WTC11 (cell line): ENCODE measurements at regions of chr7 and their contacts with region 1.

Region 1: DNA sequence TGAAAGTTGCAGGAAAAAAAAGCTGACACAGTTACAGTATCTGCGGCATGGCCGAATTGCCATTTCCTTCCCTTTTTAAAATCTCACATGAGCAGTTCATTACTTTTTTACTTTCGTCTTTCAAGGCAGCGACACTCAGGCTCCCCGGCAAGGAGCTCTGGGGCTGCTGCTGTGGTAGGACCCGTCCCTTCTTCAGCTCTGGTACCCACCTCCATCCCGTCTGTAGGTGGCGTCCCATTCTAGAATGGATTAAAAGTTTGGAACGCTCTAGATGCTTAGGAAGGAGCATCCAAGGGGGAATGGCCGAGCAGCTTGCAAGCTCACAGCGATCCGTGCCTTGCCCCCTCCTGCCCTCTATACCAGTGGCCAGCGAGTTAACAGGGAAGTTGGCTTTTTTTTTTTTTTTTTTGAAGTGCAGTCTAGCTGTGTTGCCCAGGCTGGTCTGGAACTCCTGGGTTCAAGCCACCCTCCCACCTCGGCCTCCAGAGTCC is 22.8 kb upstream of the TTYH3 start:
- DNase-seq: peak; percentile 73
- ATAC-seq: peak; percentile 63
- H3K4me3 Mint-ChIP-seq: no peak overlapping the region
- H3K27ac Mint-ChIP-seq: peak overlapping the region; percentile 22; the same call in 1 of the 2 replicates
- H3K4me1 Mint-ChIP-seq: peaks cover 20% of the 10 kb centered on the region
- H3K27me3 Mint-ChIP-seq: no peaks in the 10 kb centered on the region
- CTCF ChIP-seq: no peak

Region 2: GRCh38 chr7:2621061-2621828 is 12.3 kb after region 1 on chr7:
- CTCF ChIA-PET with region 1: interaction called, 27 read pairs
- POLR2A ChIA-PET with region 1: interaction called, 8 read pairs
- DNase-seq: peak; percentile 62
- ATAC-seq: peak; percentile 34
- H3K4me3 Mint-ChIP-seq: no peak overlapping the region
- H3K27ac Mint-ChIP-seq: peak overlapping the region; percentile 89; the same call in 1 of the 2 replicates
- H3K4me1 Mint-ChIP-seq: peaks cover 35% of the 10 kb centered on the region
- H3K27me3 Mint-ChIP-seq: no peaks in the 10 kb centered on the region; the same call in 1 of the 2 replicates
- CTCF ChIP-seq: no peak

Region 3: GRCh38 chr7:2641406-2642393 is 32.7 kb after region 1 on chr7:
- CTCF ChIA-PET with region 1: interaction called, 15 read pairs
- POLR2A ChIA-PET with region 1: no interaction called
- DNase-seq: peak; percentile 88
- ATAC-seq: peak; percentile 60
- H3K4me3 Mint-ChIP-seq: 0 out of 2 replicates have a peak overlapping the region, but pooled peaks have one; percentile 20
- H3K27ac Mint-ChIP-seq: peak overlapping the region; percentile 92
- H3K4me1 Mint-ChIP-seq: peaks cover 35% of the 10 kb centered on the region
- H3K27me3 Mint-ChIP-seq: no peaks in the 10 kb centered on the region
- CTCF ChIP-seq: no peak

Region 4: GRCh38 chr7:2660585-2661408 is 51.8 kb after region 1 on chr7:
- CTCF ChIA-PET with region 1: interaction called, 10 read pairs
- POLR2A ChIA-PET with region 1: no interaction called
- DNase-seq: no peak
- ATAC-seq: no peak
- H3K4me3 Mint-ChIP-seq: no peak overlapping the region
- H3K27ac Mint-ChIP-seq: peak overlapping the region; percentile 83
- H3K4me1 Mint-ChIP-seq: peaks cover 6% of the 10 kb centered on the region; the same call in 1 of the 2 replicates
- H3K27me3 Mint-ChIP-seq: no peaks in the 10 kb centered on the region
- CTCF ChIP-seq: peak; percentile 58

Region 5: GRCh38 chr7:2680792-2681490 is 72.0 kb after region 1 on chr7:
- CTCF ChIA-PET with region 1: interaction called, 18 read pairs
- POLR2A ChIA-PET with region 1: no interaction called
- DNase-seq: peak; percentile 89
- ATAC-seq: peak; percentile 90
- H3K4me3 Mint-ChIP-seq: no peak overlapping the region
- H3K27ac Mint-ChIP-seq: no peak overlapping the region
- H3K4me1 Mint-ChIP-seq: no peaks in the 10 kb centered on the region
- H3K27me3 Mint-ChIP-seq: peaks cover 2% of the 10 kb centered on the region
- CTCF ChIP-seq: peak; percentile 69